Naive thymus-derived CD4-positive, alpha-beta T cell (primary cell): ENCODE measurements at regions of chr13 and their contacts with region 1.

Region 1: GRCh38 chr13:21670883-21671619 is at the start of gene FGF9:
- DNase-seq: peak; percentile 76 to 88 (median 86)
- ATAC-seq: peak; percentile 89
- H3K4me3 ChIP-seq: peak within 1 kb of the TSS; percentile 92
- H3K4me3 Mint-ChIP-seq: peak within 1 kb of the TSS; percentile 88 to 98 (median 93)
- H3K27ac ChIP-seq: peak within 1 kb of the TSS; percentile 48
- H3K27ac Mint-ChIP-seq: peak within 1 kb of the TSS; percentile 61 to 94 (median 78)
- H3K4me1 ChIP-seq: peaks cover 19 to 32% of the 10 kb centered on the region in 2 donors
- H3K4me1 Mint-ChIP-seq: peaks cover 27 to 45% (median 44%) of the 10 kb centered on the region in 7 donors
- H3K27me3 ChIP-seq: peaks cover 0 to 4% of the 10 kb centered on the region in 2 donors
- H3K27me3 Mint-ChIP-seq: peaks cover 5 to 77% (median 20%) of the 10 kb centered on the region in 5 donors
- total RNA-seq, gene FGF9: 0.19 to 5.6 (median 2.0) TPM

Region 2: GRCh38 chr13:20703780-20704445 is 967.1 kb before region 1 on chr13:
- CTCF ChIA-PET with region 1: no interaction called
- POLR2A ChIA-PET with region 1: no interaction called
- intact Hi-C with region 1: loop called in 1 of 2 experiments (anchors 5 kb)
- DNase-seq: peak; percentile 70 to 84 (median 80)
- ATAC-seq: peak; percentile 93
- H3K4me3 ChIP-seq: no peak overlapping the region
- H3K4me3 Mint-ChIP-seq: peak overlapping the region in 4 of 10 donors; percentile 59 to 97 (median 72)
- H3K27ac ChIP-seq: no peak overlapping the region
- H3K27ac Mint-ChIP-seq: peak overlapping the region in 1 of 9 donors; percentile 56
- H3K4me1 ChIP-seq: peaks cover 3 to 8% of the 10 kb centered on the region in 2 donors
- H3K4me1 Mint-ChIP-seq: peaks cover 0 to 13% (median 8%) of the 10 kb centered on the region in 7 donors
- H3K27me3 ChIP-seq: peaks cover 0 to 5% of the 10 kb centered on the region in 2 donors
- H3K27me3 Mint-ChIP-seq: peaks cover 13 to 48% (median 17%) of the 10 kb centered on the region in 5 donors

Region 3: DNA sequence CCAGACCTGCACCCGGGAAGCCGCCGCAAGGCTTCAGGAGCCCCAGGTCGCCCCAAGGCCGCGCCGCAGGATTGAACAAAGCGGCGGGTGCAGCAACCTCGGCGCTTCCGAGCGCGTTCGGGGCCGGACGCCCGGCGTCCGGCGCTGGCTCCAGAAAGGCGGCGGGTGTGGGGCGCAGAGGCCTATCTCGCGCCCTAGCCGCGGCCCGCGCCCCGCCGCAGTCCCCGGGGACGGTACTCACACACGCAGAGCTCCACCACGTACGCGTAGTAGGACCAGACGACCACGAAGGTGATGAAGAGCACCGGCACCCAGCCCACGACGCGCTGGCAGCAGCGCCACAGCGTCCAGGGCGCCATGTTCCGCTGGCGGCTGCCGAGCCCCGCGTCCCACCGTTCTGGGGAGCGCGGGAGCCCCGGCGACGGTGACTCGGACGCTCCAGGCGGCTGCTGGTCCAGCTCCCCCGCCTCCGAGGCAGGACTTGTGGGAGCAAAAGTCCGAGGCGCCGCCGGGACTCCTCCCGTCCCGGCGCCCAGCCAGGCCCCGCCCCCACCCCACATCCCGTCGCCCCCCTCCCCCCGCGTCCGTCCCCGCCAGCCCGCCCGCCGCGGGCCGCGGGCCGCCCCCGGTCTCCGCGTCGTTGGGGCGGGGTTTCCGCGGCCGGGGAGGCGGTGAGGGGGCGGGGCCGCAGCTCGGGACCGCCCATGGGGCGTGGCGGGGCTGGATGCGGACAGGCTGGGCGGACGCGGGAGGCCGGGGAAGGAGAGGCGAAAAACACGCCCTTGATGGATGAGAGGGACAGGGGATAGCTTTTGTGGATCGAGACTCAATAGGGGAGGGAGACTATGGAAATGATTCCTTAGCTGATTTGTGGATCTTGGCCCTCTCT is 212.0 kb before region 1 on chr13 and contains the start of gene ZDHHC20:
- CTCF ChIA-PET with region 1: no interaction called
- POLR2A ChIA-PET with region 1: no interaction called
- intact Hi-C with region 1: loop called (anchors 2 to 10 kb)
- DNase-seq: peak; percentile 75 to 99 (median 88)
- ATAC-seq: peak; percentile 98
- H3K4me3 ChIP-seq: peak within 1 kb of the TSS; percentile 90
- H3K4me3 Mint-ChIP-seq: peak within 1 kb of the TSS; percentile 91 to 97 (median 94)
- H3K27ac ChIP-seq: peak within 1 kb of the TSS; percentile 97
- H3K27ac Mint-ChIP-seq: peak within 1 kb of the TSS; percentile 74 to 98 (median 94)
- H3K4me1 ChIP-seq: peaks cover 9 to 19% of the 10 kb centered on the region in 2 donors
- H3K4me1 Mint-ChIP-seq: peaks cover 27 to 55% (median 42%) of the 10 kb centered on the region in 7 donors
- H3K27me3 ChIP-seq: no peaks in the 10 kb centered on the region
- H3K27me3 Mint-ChIP-seq: peaks cover 0 to 7% (median 0%) of the 10 kb centered on the region in 5 donors
- total RNA-seq, gene ZDHHC20: 60.8 to 89.9 (median 71.7) TPM

Region 4: GRCh38 chr13:21567714-21568113 is 103.3 kb before region 1 on chr13:
- CTCF ChIA-PET with region 1: no interaction called
- POLR2A ChIA-PET with region 1: no interaction called
- intact Hi-C with region 1: no loop called
- DNase-seq: no peak
- ATAC-seq: no peak
- H3K4me3 ChIP-seq: no peak overlapping the region
- H3K4me3 Mint-ChIP-seq: no peak overlapping the region
- H3K27ac ChIP-seq: no peak overlapping the region
- H3K27ac Mint-ChIP-seq: peak overlapping the region in 3 of 9 donors; percentile 20 to 41 (median 38)
- H3K4me1 ChIP-seq: no peaks in the 10 kb centered on the region
- H3K4me1 Mint-ChIP-seq: peaks cover 8 to 48% (median 28%) of the 10 kb centered on the region in 7 donors
- H3K27me3 ChIP-seq: no peaks in the 10 kb centered on the region
- H3K27me3 Mint-ChIP-seq: no peaks in the 10 kb centered on the region

Region 5: GRCh38 chr13:21583478-21583877 is 87.6 kb before region 1 on chr13:
- CTCF ChIA-PET with region 1: no interaction called
- POLR2A ChIA-PET with region 1: no interaction called
- intact Hi-C with region 1: no loop called
- DNase-seq: no peak
- ATAC-seq: no peak
- H3K4me3 ChIP-seq: no peak overlapping the region
- H3K4me3 Mint-ChIP-seq: no peak overlapping the region
- H3K27ac ChIP-seq: no peak overlapping the region
- H3K27ac Mint-ChIP-seq: no peak overlapping the region
- H3K4me1 ChIP-seq: peaks cover 12 to 19% of the 10 kb centered on the region in 2 donors
- H3K4me1 Mint-ChIP-seq: peaks cover 11 to 67% (median 59%) of the 10 kb centered on the region in 7 donors
- H3K27me3 ChIP-seq: no peaks in the 10 kb centered on the region
- H3K27me3 Mint-ChIP-seq: no peaks in the 10 kb centered on the region

Region 6: DNA sequence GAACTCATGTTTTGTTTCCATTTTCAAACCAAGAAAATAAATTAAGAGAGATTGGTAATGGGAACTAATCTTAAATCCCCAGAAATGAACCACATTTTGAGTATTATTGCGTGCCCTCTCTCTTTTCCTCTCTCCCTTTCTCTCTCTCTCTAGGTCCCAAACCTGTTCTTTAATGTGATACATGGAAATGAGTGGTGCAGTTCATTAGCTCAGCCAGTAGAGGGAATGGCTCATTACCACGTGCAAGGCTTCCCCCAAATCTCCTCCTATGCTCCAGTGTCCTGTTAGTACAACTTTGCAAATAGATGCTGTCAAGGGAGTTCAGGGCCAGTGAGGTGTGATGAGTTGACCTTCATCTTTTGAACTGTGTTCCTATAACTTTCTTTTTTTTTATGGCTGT is 178.3 kb after region 1 on chr13:
- CTCF ChIA-PET with region 1: no interaction called
- POLR2A ChIA-PET with region 1: no interaction called
- intact Hi-C with region 1: loop called in 1 of 2 experiments (anchors 10 kb)
- DNase-seq: peak in 6 of 9 donors; percentile 2 to 37 (median 21)
- ATAC-seq: peak; percentile 70
- H3K4me3 ChIP-seq: no peak overlapping the region
- H3K4me3 Mint-ChIP-seq: no peak overlapping the region
- H3K27ac ChIP-seq: no peak overlapping the region
- H3K27ac Mint-ChIP-seq: no peak overlapping the region
- H3K4me1 ChIP-seq: no peaks in the 10 kb centered on the region
- H3K4me1 Mint-ChIP-seq: peaks cover 0 to 6% (median 2%) of the 10 kb centered on the region in 7 donors
- H3K27me3 ChIP-seq: no peaks in the 10 kb centered on the region
- H3K27me3 Mint-ChIP-seq: no peaks in the 10 kb centered on the region

Region 7: GRCh38 chr13:22017226-22017625 is 346.2 kb after region 1 on chr13:
- CTCF ChIA-PET with region 1: no interaction called
- POLR2A ChIA-PET with region 1: no interaction called
- intact Hi-C with region 1: loop called (anchors 5 to 10 kb)
- DNase-seq: peak in 2 of 9 donors; percentile 4 to 10
- ATAC-seq: peak; percentile 47
- H3K4me3 ChIP-seq: no peak overlapping the region
- H3K4me3 Mint-ChIP-seq: no peak overlapping the region
- H3K27ac ChIP-seq: no peak overlapping the region
- H3K27ac Mint-ChIP-seq: peak overlapping the region in 3 of 9 donors; percentile 1 to 46 (median 5)
- H3K4me1 ChIP-seq: no peaks in the 10 kb centered on the region
- H3K4me1 Mint-ChIP-seq: peaks cover 5 to 14% (median 10%) of the 10 kb centered on the region in 7 donors
- H3K27me3 ChIP-seq: no peaks in the 10 kb centered on the region
- H3K27me3 Mint-ChIP-seq: no peaks in the 10 kb centered on the region

Region 8: DNA sequence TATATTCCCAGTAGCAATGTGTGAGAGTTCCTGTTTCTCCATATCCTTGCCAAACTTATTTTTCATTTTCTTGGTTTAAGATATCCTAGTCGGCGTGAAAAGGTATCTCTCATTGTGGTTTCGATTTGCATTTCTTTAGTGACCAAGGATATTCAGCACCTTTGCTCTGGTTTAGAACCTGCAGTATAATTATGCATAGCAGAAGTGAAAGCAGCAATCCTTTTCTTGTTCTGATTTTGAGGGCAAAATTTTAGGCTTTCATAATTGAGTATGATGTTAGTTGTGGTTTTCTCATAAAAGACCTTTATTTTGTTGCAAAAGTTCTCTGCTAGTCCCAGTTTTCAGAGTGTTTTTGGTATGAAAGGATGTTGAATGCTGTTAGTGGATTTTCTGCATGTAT is 490.8 kb after region 1 on chr13:
- CTCF ChIA-PET with region 1: no interaction called
- POLR2A ChIA-PET with region 1: no interaction called
- intact Hi-C with region 1: loop called in 1 of 2 experiments (anchors 10 kb)
- DNase-seq: peak in 5 of 9 donors; percentile 8 to 56 (median 24)
- ATAC-seq: peak; percentile 64
- H3K4me3 ChIP-seq: peak overlapping the region; percentile 17
- H3K4me3 Mint-ChIP-seq: peak overlapping the region; percentile 4 to 87 (median 55)
- H3K27ac ChIP-seq: peak overlapping the region; percentile 23
- H3K27ac Mint-ChIP-seq: peak overlapping the region in 7 of 9 donors; percentile 1 to 81 (median 35)
- H3K4me1 ChIP-seq: peaks cover 8 to 11% of the 10 kb centered on the region in 2 donors
- H3K4me1 Mint-ChIP-seq: peaks cover 16 to 60% (median 34%) of the 10 kb centered on the region in 7 donors
- H3K27me3 ChIP-seq: no peaks in the 10 kb centered on the region
- H3K27me3 Mint-ChIP-seq: no peaks in the 10 kb centered on the region

Region 9: GRCh38 chr13:22278336-22278929 is 607.4 kb after region 1 on chr13:
- CTCF ChIA-PET with region 1: no interaction called
- POLR2A ChIA-PET with region 1: no interaction called
- intact Hi-C with region 1: loop called in 1 of 2 experiments (anchors 1 kb)
- DNase-seq: peak; percentile 27 to 71 (median 55)
- ATAC-seq: peak; percentile 73
- H3K4me3 ChIP-seq: no peak overlapping the region
- H3K4me3 Mint-ChIP-seq: peak overlapping the region in 1 of 10 donors; percentile 14
- H3K27ac ChIP-seq: no peak overlapping the region
- H3K27ac Mint-ChIP-seq: peak overlapping the region in 2 of 9 donors; percentile 5 to 43
- H3K4me1 ChIP-seq: peaks cover 0 to 4% of the 10 kb centered on the region in 2 donors
- H3K4me1 Mint-ChIP-seq: peaks cover 0 to 21% (median 7%) of the 10 kb centered on the region in 7 donors
- H3K27me3 ChIP-seq: no peaks in the 10 kb centered on the region
- H3K27me3 Mint-ChIP-seq: no peaks in the 10 kb centered on the region